Activated CD4-positive, alpha-beta memory T cell treated with anti-CD3 and anti-CD28 coated beads, Interleukin-2, amount 10 ng/mL, durations not matched to agents 7 days and 5 days (primary cell): ENCODE measurements at regions of chr2 and their contacts with region 1.

Region 1: GRCh38 chr2:30447149-30448045 is at the start of gene LCLAT1:
- DNase-seq: peak; percentile 86
- H3K4me3 Mint-ChIP-seq: peak within 1 kb of the TSS; percentile 92
- H3K27ac Mint-ChIP-seq: peak within 1 kb of the TSS; percentile 88
- H3K4me1 Mint-ChIP-seq: peaks cover 22% of the 10 kb centered on the region
- H3K27me3 Mint-ChIP-seq: no peaks in the 10 kb centered on the region
- total RNA-seq, gene LCLAT1: 17.0 to 17.6 TPM

Region 2: DNA sequence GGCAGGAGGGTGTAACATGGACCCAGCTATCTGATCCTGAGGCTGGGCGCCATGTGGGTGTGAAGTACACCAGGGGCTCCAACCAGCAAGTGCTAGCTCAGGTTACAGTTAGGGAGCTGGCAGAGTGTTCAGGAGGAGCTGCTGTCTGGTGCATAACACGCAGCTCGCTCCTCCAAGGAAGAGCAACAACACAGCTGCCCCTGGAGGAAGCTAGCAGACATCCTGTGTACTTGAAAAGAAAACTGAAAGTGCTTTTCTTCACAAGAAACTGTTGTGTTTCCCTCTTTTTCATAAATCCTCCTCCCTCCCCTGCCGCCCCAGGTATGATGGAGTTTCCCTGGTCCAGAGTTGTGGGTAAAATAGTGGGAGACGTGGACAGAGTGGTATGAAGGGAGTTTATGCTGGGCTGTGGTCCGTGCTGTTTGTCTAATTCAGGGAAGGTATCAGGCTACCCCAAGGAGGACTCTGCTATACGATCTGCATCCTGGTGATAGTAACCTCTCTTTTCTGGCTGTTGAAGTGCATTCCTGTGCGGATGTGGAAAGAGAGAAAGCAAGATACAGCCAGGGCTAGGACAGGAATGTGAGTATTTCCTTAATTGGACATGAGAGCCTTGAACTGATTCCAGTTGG is 222.2 kb before region 1 on chr2:
- CTCF ChIA-PET with region 1: no interaction called
- POLR2A ChIA-PET with region 1: interaction called, 44 read pairs
- DNase-seq: peak; percentile 59
- H3K4me3 Mint-ChIP-seq: peak overlapping the region; percentile 95
- H3K27ac Mint-ChIP-seq: peak overlapping the region; percentile 93
- H3K4me1 Mint-ChIP-seq: peaks cover 59% of the 10 kb centered on the region
- H3K27me3 Mint-ChIP-seq: peaks cover 5% of the 10 kb centered on the region

Region 3: GRCh38 chr2:30231212-30231995 is 216.0 kb before region 1 on chr2 and contains the start of gene LBH:
- CTCF ChIA-PET with region 1: interaction called, 7 read pairs
- POLR2A ChIA-PET with region 1: interaction called, 44 read pairs
- DNase-seq: peak; percentile 88
- H3K4me3 Mint-ChIP-seq: peak within 1 kb of the TSS; percentile 75
- H3K27ac Mint-ChIP-seq: peak within 1 kb of the TSS; percentile 79
- H3K4me1 Mint-ChIP-seq: peaks cover 58% of the 10 kb centered on the region
- H3K27me3 Mint-ChIP-seq: peaks cover 11% of the 10 kb centered on the region
- total RNA-seq, gene LBH: 105 to 110 TPM

Region 4: GRCh38 chr2:30266051-30266621 is 181.3 kb before region 1 on chr2:
- CTCF ChIA-PET with region 1: interaction called, 3 read pairs
- POLR2A ChIA-PET with region 1: interaction called, 14 read pairs
- DNase-seq: peak; percentile 74
- H3K4me3 Mint-ChIP-seq: peak overlapping the region; percentile 75
- H3K27ac Mint-ChIP-seq: peak overlapping the region; percentile 92
- H3K4me1 Mint-ChIP-seq: peaks cover 64% of the 10 kb centered on the region
- H3K27me3 Mint-ChIP-seq: no peaks in the 10 kb centered on the region

Region 5: DNA sequence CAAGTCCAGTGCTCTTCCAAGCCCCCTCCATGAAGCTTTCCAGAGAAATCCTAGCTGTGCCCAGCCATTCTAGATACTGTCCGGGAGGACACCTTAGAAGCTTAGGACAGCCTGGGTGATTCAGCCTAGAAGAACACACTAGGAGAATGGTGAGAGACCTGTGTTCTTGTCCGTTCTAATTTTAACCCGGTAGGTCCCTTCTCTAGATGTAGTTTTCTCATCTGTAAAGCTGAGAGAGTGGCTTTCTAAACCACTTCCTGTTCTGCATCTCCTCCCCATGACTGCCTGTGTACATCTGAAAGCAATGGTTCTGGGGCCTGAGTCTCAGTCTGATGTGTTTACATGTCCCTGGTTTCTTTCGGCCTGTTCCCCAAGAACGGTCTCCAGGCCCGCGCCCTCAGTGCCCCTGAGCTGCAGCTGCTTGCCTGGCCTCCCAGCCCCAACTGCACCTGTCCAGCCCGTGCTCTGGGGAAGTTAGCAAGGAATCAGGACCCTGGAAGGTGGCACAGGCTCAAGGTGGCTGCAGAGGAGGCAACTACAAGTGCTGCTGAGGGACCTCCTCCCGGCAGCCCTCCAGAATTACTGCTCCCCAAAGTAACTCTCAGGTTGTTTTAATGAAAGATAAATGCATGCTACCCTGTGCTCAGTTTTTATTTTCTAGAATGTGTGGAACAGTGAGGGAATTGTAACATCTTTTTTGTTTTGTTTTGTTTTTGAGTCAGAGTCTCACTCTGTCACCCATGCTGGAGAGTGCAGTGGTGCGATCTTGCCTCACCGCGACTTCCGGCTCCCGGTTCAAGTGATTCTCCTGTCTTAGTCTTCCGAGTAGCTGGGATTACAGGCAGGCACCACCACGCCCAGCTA is 110.2 kb before region 1 on chr2:
- CTCF ChIA-PET with region 1: interaction called, 9 read pairs
- POLR2A ChIA-PET with region 1: interaction called, 17 read pairs
- DNase-seq: peak; percentile 75
- H3K4me3 Mint-ChIP-seq: peak overlapping the region; percentile 72
- H3K27ac Mint-ChIP-seq: peak overlapping the region; percentile 98
- H3K4me1 Mint-ChIP-seq: peaks cover 65% of the 10 kb centered on the region
- H3K27me3 Mint-ChIP-seq: no peaks in the 10 kb centered on the region

Region 6: DNA sequence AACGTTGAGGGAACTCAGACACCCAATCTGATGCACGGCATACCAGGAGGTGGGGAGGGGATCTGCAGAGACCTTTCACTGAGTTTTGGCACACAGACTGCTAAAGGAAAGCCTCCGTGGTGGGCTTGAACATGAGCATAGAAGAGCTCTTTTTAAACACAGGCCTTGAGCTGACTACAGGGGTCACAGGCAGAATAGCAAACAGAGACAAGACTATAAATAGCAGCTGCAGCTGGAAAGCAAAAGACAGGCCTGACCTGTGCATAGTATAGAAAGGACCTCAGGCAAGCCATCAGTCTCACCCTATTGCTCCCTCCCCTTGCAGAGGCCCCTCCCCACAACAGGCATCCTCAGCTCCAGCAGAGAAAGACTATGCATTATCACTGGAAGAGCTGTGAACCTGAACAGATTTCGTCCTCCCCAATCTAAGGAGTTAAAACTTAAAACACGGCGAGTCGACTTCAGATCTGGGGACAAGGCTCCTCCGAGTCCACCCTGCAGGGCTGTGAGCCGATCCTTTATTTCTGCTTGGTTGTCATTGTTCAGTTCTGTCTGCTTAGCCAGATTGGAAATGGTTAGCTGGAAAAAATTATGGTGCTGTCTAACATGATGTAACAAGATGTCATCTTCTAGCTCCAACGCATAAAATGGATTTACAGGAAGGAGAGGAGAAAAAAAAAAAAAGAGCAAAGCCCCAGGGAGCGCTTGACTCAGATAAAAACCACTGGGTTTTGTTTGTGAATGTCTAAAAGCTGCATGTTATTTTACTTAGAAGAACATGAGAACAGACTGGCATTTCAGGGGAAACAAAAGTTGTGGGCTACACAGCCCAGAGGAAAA is 25.6 kb before region 1 on chr2:
- CTCF ChIA-PET with region 1: interaction called, 8 read pairs
- POLR2A ChIA-PET with region 1: interaction called, 22 read pairs
- DNase-seq: peak; percentile 21
- H3K4me3 Mint-ChIP-seq: peak overlapping the region; percentile 39
- H3K27ac Mint-ChIP-seq: peak overlapping the region; percentile 85
- H3K4me1 Mint-ChIP-seq: peaks cover 32% of the 10 kb centered on the region
- H3K27me3 Mint-ChIP-seq: no peaks in the 10 kb centered on the region

Region 7: DNA sequence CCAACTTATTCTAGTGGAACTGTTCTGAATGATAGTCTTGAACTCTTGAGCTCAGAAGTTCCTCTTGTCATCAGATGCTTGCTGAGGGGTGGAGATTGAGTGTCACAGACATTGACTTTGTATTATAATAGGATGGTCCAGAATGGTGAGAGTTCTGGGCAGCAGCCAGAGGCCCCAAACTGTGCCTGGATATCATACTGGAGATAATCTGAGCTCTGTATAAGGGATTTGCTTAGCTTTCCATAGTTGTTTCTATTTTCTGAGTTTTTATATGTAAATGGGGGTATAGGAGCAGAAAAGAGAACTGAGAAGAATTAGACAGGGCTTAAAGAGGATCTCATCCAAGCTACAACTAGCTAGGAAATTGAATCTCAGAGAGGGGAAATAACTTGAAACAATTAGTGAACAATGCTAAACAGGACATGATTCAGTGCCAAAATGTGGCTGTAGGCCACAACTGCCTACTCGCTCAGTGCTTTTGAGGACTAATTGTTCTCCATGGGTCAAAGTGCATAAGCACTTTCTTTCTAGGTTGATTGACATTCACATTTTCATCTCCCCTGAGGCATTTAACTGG is 10.4 kb before region 1 on chr2:
- CTCF ChIA-PET with region 1: interaction called, 3 read pairs
- POLR2A ChIA-PET with region 1: interaction called, 11 read pairs
- DNase-seq: no peak
- H3K4me3 Mint-ChIP-seq: no peak overlapping the region
- H3K27ac Mint-ChIP-seq: no peak overlapping the region
- H3K4me1 Mint-ChIP-seq: peaks cover 5% of the 10 kb centered on the region
- H3K27me3 Mint-ChIP-seq: no peaks in the 10 kb centered on the region